Mammary epithelial cell (primary cell): ENCODE measurements at regions of chr4 and their contacts with region 1.

Region 1: DNA sequence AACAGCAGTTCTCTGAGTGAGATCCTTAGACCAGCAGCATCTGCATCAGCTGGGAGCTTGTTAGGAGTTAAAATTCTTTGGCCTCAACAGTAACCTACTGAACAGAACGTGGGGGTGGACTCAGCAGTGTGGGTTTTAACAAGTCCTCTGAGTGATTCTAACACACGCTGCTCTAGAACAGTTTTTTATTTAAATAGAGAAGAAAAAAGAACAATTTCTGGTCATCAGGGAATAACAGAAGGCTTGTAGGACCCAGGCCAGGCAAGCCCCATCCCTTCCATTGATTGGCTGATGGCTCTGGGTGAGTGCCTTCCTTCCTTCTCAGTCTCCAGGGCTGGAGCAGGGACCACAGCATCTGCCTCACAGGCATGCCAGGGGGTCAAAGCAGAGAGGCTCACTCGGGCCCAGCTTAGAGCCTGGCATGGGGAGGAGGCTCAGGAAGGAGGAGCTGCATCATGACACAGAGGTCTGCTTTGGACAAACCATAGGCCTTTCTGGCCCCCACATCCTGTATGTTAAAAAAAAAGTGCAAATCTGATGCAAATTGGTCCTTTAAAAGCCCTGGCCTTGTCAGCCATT is 56.7 kb downstream of the JAKMIP1 start:
- DNase-seq: no peak
- H3K4me3 ChIP-seq: no peak overlapping the region
- H3K27ac ChIP-seq: no peak overlapping the region
- H3K4me1 ChIP-seq: no peaks in the 10 kb centered on the region
- H3K27me3 ChIP-seq: no peaks in the 10 kb centered on the region
- CTCF ChIP-seq: no peak

Region 2: DNA sequence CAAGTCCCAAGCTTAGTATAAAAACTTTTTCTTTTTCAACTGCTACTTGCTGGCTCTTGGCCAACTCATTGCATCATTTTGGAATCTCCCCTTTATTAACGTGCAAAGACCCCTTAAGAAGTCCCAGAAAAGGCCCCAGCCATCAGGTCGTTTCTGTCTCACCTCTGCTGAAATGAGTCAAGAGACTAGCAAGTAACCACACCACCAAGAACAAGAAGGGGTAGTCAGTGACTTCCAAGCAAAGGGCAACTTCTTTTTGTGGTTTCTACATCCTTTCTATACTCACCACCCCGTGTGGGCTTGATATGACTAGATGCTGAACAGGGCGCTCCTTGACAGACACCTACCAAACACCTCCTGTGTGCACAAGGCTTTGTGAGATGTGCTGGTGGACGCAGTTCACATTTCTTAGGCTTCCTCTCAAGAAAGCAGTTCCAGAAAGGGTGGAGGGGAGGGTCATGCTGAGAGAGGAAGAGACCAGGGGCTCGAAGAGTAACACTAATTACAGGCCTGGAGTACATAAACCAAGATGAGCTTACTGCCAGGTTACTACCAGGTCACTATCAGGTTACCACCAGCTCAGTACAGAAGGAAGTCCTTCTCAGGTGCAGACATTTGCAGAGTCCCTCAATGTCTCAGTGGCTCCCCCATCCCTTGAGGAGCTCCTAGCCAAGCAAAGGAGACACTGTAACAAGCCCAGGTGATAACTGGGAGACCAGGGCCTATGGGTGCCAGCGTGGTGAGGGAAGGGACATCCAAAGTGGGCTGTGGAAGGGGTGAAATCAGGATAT is 37.3 kb after region 1 on chr4:
- CTCF ChIA-PET with region 1: no interaction called
- dilution Hi-C with region 1: loop called (anchors 5 kb)
- in situ Hi-C with region 1: no loop called
- intact Hi-C with region 1: no loop called
- DNase-seq: no peak
- H3K4me3 ChIP-seq: no peak overlapping the region
- H3K27ac ChIP-seq: no peak overlapping the region
- H3K4me1 ChIP-seq: no peaks in the 10 kb centered on the region
- H3K27me3 ChIP-seq: no peaks in the 10 kb centered on the region
- CTCF ChIP-seq: no peak